CD4-positive, alpha-beta memory T cell (primary cell): ENCODE measurements at regions of chr17 and their contacts with region 1.

Region 1: DNA sequence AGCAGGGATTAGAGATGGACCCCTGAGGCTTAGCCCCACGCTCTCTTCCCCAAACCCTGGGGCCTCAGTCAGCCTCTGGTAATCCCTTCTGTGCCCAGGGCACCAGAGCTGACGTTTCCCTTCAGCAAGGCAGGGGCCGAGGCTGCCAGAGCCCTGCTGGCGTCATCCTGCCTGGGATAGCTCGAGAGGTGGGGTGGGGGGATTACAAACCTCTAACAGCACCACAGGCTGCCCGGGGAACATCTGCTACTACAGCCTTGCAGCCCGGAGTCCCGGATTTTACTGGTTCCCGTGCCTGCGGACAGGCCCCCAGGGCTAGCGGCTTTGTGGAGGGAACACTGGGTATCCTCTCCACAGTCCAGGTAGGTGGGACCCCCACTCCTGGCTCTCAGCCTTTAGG is at the start of gene AANAT:
- DNase-seq: no peak
- H3K4me3 ChIP-seq: no peak within 1 kb of the TSS
- H3K4me3 Mint-ChIP-seq: no peak within 1 kb of the TSS
- H3K27ac ChIP-seq: no peak within 1 kb of the TSS
- H3K27ac Mint-ChIP-seq: peak within 1 kb of the TSS in 1 of 7 donors; percentile 29
- H3K4me1 ChIP-seq: peaks cover 4% of the 10 kb centered on the region
- H3K4me1 Mint-ChIP-seq: peaks cover 3 to 6% (median 3%) of the 10 kb centered on the region in 4 donors
- H3K27me3 ChIP-seq: no peaks in the 10 kb centered on the region
- H3K27me3 Mint-ChIP-seq: no peaks in the 10 kb centered on the region
- total RNA-seq, gene AANAT: not detected

Region 2: GRCh38 chr17:76452660-76453430 is 14.5 kb before region 1 on chr17 and contains the start of gene UBE2O:
- CTCF ChIA-PET with region 1: interaction called, 14 read pairs
- POLR2A ChIA-PET with region 1: interaction called, 7 read pairs
- intact Hi-C with region 1: no loop called
- DNase-seq: peak; percentile 93 to 95 (median 94)
- H3K4me3 ChIP-seq: peak within 1 kb of the TSS; percentile 52 to 58
- H3K4me3 Mint-ChIP-seq: peak within 1 kb of the TSS; percentile 83 to 92 (median 87)
- H3K27ac ChIP-seq: peak within 1 kb of the TSS; percentile 72
- H3K27ac Mint-ChIP-seq: peak within 1 kb of the TSS; percentile 77 to 99 (median 96)
- H3K4me1 ChIP-seq: peaks cover 20% of the 10 kb centered on the region
- H3K4me1 Mint-ChIP-seq: peaks cover 17 to 44% (median 29%) of the 10 kb centered on the region in 4 donors
- H3K27me3 ChIP-seq: no peaks in the 10 kb centered on the region
- H3K27me3 Mint-ChIP-seq: no peaks in the 10 kb centered on the region
- total RNA-seq, gene UBE2O: 42.5 to 43.7 TPM

Region 3: DNA sequence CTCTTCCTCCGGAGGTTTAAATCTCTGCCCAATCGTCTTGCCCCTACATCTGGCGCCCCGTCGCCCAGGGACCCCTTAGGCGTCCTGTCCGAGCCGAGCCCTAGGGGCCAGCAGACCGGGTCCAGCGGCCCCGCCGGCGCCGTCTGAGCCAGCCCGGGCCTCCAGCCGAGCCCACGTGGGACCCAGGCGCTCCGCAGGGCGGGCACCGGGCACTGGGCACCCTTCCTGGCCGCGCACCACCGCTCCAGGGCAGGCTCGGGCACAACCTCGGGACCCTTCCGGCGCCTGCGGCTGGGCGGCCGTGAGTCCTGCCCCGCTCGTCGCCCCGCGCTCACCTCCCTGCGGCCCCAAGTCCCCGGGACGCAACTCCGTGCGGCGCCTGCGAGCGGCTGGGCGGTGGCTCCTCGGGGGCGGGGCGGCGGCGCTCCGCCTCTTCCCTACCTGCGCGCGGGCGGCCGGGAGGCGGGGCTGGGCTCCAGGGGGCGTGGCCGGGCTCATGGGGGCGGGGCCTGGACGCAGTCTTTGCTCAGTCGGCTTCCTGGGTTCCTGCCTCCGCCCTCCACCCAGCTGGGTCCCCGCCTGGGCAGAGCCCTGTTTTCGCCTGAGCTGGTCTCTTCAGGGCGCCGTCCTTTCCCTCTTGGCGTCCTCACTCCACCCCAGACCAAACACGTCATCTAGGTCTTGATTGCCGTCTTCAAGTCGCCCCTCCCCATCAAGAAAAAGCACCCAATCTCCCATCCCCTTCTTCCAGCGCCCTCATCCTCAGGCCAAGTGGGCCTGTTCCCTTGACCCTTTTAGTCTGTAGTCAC is 33.9 kb after region 1 on chr17 and contains the start of gene RHBDF2:
- CTCF ChIA-PET with region 1: interaction called, 161 read pairs
- POLR2A ChIA-PET with region 1: interaction called, 38 read pairs
- intact Hi-C with region 1: loop called (anchors 1 kb)
- DNase-seq: peak; percentile 92 to 98 (median 95)
- H3K4me3 ChIP-seq: peak within 1 kb of the TSS; percentile 61 to 83
- H3K4me3 Mint-ChIP-seq: peak within 1 kb of the TSS; percentile 86 to 91 (median 89)
- H3K27ac ChIP-seq: peak within 1 kb of the TSS; percentile 69
- H3K27ac Mint-ChIP-seq: peak within 1 kb of the TSS; percentile 85 to 100 (median 98)
- H3K4me1 ChIP-seq: peaks cover 41% of the 10 kb centered on the region
- H3K4me1 Mint-ChIP-seq: peaks cover 15 to 56% (median 40%) of the 10 kb centered on the region in 4 donors
- H3K27me3 ChIP-seq: no peaks in the 10 kb centered on the region
- H3K27me3 Mint-ChIP-seq: no peaks in the 10 kb centered on the region
- total RNA-seq, gene RHBDF2: 50.0 to 62.2 TPM

Region 4: DNA sequence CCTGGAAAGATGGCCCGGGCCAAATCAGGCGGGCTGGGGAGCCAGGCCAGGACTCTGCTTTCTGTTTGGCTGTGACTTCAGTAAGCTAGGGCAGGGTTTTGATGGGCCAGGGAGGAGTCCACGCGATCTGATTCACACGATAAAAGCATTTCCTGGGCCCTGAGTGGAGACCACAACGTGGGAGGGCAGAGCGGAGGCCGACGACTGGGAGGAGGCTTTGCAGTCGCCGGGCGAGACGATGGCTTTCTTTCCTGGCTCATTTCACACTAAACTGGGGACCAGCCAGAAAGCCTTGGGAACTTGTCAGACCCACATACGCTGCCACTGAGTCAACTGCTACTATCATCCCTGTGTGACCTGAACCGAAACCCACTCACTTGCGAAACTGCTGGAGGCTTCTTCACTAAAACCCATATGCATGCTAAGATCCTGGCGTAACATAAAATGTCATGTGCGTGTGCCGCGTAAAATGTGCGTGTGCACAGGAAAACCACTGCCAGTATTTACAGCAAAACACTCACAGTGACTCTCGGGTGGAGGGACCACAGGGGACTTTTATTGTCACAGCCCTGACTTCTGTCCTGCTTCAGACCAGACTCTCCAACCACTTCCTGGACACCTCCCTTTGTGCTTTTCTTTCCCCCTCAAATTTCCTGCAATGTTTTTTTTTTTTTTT is 48.0 kb after region 1 on chr17:
- CTCF ChIA-PET with region 1: interaction called, 14 read pairs
- POLR2A ChIA-PET with region 1: interaction called, 3 read pairs
- intact Hi-C with region 1: no loop called
- DNase-seq: peak; percentile 91 to 95 (median 94)
- H3K4me3 ChIP-seq: peak overlapping the region; percentile 20 to 25
- H3K4me3 Mint-ChIP-seq: peak overlapping the region; percentile 69 to 86 (median 80)
- H3K27ac ChIP-seq: peak overlapping the region; percentile 76
- H3K27ac Mint-ChIP-seq: peak overlapping the region; percentile 94 to 100 (median 99)
- H3K4me1 ChIP-seq: peaks cover 82% of the 10 kb centered on the region
- H3K4me1 Mint-ChIP-seq: peaks cover 31 to 85% (median 51%) of the 10 kb centered on the region in 4 donors
- H3K27me3 ChIP-seq: no peaks in the 10 kb centered on the region
- H3K27me3 Mint-ChIP-seq: no peaks in the 10 kb centered on the region